Right ventricle myocardium inferior (tissue), 1 donor: ENCODE measurements at regions of chr3 and their contacts with region 1.

Region 1: GRCh38 chr3:188294823-188295487 is 141.0 kb downstream of the LPP start:
- DNase-seq: no peak
- ATAC-seq: peak; percentile 76

Region 2: GRCh38 chr3:187902041-187902471 is 392.9 kb before region 1 on chr3:
- intact Hi-C with region 1: no loop called
- DNase-seq: no peak
- ATAC-seq: no peak

Region 3: DNA sequence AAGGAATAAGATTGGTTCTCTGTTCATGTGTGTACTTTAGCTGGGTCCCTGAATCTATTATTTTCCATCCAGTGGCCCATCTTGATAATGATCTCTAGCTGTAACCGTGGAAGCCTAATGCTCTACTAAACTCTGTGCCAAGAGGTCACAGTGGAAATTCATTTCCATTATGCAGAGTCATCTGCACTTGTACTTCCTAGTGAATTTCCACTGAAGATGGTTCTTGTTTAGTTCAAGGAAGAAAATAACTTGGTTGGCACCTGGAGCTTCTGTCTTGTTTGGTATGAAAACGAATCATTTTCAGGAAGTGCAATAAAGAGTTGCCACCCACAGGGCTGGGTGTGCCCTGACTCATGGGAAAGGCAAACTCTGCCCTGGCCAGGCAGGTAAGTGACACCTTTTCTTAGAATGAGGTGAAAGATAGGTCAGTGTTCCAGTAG is 130.7 kb before region 1 on chr3:
- intact Hi-C with region 1: no loop called
- DNase-seq: no peak
- ATAC-seq: no peak

Region 4: DNA sequence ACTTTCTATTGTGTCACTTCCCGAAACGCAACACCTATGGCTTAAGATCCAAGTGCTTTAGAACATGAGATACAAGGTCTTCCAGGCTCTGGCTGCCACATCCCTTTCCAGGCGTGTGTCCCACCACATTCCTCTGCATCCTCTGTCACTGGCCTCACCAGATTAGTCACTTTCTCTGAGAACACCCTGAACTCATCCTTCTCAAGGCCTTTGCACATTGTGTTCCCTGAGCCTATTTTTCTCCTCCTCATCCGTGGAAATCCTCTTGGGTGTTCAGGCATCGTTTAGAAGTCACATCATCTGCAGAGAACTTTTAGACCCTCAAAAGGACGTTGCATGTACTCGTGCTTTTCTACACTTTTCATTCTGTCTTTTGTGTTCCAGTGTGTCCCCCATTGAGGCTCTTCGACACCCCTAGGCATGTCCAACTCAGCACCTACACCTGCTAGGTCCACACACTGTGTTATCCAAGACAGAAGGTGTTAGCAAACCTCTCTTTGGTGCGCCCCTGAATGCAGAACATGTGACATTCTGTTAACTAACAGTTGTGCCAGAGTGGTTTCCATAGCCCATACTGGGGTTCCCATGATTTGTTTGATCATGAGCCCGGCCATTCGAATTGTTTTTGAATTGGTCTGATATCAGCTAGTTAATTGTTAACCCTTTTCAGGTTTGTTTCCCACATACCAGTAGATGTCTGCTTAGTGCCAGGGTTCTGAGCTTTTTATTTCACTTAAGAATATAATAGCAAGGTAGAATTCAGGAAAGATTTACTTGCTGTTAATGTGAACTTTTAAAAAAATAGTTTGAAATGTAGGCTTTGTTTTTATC is 73.8 kb before region 1 on chr3:
- intact Hi-C with region 1: loop called (anchors 5 kb)
- DNase-seq: no peak
- ATAC-seq: peak; percentile 86

Region 5: DNA sequence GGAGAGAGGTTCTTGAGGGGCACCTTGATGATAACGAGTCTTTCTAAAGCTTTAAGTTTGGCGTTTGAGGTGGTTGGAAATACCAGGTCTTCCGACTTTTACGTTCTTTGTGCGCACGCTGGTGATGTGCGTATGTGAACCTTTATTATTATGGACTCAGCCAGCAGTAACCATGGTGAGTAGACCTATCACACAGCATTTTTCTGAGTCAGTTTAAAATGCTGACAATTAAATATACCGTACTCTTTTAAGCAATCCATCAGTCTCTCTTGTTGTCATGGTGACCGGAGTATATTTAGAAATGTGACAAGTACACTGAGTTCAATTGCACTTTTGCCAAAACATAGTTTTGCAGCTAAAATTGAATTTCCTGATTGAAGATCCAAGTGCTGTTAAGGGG is 31.2 kb after region 1 on chr3:
- intact Hi-C with region 1: loop called (anchors 5 kb)
- DNase-seq: no peak
- ATAC-seq: peak; percentile 58

Region 6: DNA sequence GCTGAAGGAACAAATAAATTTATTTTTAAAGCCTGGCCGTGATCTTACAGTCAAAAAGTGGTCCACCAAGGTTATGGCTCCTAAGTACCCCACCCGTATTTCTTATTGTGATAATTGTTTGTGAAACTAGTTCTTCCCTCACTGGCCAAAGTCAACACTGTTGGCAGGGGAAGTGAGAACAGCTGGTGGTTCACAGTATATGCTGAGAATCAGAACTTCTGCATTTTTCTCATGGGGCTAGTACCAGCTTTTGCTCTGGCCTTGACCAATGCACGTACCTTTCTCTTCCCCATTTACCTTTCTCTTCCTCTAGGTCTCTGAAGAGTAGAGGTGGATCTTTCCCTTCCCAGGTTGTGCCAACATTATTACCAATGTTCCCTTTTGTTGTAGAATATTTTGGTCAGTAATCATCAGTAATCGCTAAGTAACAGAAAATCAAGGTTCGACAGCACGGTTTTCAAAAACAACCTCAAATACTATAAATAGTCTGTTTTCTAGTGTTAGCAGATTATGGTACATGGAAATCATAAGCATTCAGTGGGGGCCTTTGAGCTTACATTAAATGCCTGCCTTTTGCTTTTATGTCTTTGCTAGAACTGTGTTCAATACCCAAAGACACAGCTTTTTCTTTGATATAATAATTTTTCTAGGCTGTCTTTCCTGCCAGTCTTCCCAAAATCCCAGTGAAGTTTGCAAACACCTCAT is 127.0 kb after region 1 on chr3:
- intact Hi-C with region 1: no loop called
- DNase-seq: no peak
- ATAC-seq: peak; percentile 75

Region 7: GRCh38 chr3:188507244-188507720 is 212.3 kb after region 1 on chr3:
- intact Hi-C with region 1: no loop called
- DNase-seq: no peak
- ATAC-seq: peak; percentile 81